ENCODE measurements at regions of chr21 and their contacts with region 1.

Region 1: GRCh38 chr21:37267269-37268184 is at the start of gene VPS26C:
- DNase-seq: peak; percentile 99 to 100 (median 100)
- H3K4me3 ChIP-seq: peak within 1 kb of the TSS; percentile 64 to 85 (median 71)
- H3K4me3 Mint-ChIP-seq: peak within 1 kb of the TSS; percentile 91 to 96
- H3K27ac ChIP-seq: peak within 1 kb of the TSS; percentile 98 to 100
- H3K27ac Mint-ChIP-seq: peak within 1 kb of the TSS; percentile 97 to 99 (median 99)
- H3K4me1 ChIP-seq: peaks cover 27 to 48% of the 10 kb centered on the region in 2 donors
- H3K4me1 Mint-ChIP-seq: peaks cover 33% of the 10 kb centered on the region
- H3K27me3 ChIP-seq: no peaks in the 10 kb centered on the region
- H3K27me3 Mint-ChIP-seq: no peaks in the 10 kb centered on the region
- CTCF ChIP-seq: no peak
- polyA plus RNA-seq, gene VPS26C: 45.4 to 75.4 (median 69.3) TPM

Region 2: DNA sequence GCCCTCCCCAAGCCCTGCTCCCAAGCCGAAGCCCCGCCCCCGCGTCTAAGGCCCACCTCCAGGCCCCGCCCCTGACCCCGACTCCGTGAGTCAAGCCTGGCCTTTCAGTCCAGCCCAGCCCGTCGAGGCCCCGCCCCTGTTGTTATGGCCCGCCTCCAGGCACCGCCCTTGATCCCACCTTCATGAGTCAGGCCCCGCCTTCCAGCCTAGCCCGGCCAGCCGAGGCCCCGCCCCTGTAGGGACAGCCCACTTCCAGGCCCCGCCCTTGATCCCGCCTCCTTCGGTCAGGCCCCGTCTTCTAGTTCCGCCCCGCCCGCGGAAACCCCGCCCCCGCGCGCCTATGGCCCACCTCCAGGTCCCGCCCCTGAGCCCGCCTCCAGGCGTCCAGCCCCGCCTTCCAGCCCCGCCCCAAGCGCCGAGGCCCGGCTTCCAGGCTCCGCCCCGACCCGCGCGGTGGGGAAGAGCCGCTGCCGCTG is 1111.2 kb before region 1 on chr21:
- intact Hi-C with region 1: loop called in 1 of 2 experiments (anchors 10 kb)
- DNase-seq: peak; percentile 99
- H3K4me3 ChIP-seq: peak overlapping the region; percentile 73 to 90 (median 77)
- H3K4me3 Mint-ChIP-seq: peak overlapping the region; percentile 86 to 93
- H3K27ac ChIP-seq: peak overlapping the region; percentile 57 to 80
- H3K27ac Mint-ChIP-seq: peak overlapping the region in 4 of 7 donors; percentile 77 to 94 (median 90)
- H3K4me1 ChIP-seq: peaks cover 43 to 46% of the 10 kb centered on the region in 2 donors
- H3K4me1 Mint-ChIP-seq: peaks cover 52% of the 10 kb centered on the region
- H3K27me3 ChIP-seq: no peaks in the 10 kb centered on the region
- H3K27me3 Mint-ChIP-seq: peaks cover 1 to 3% (median 2%) of the 10 kb centered on the region in 3 donors
- CTCF ChIP-seq: no peak

Region 3: GRCh38 chr21:37220981-37221664 is 46.4 kb before region 1 on chr21:
- intact Hi-C with region 1: loop called in 1 of 2 experiments (anchors 10 kb)
- DNase-seq: peak; percentile 89 to 96 (median 94)
- H3K4me3 ChIP-seq: peak overlapping the region; percentile 55 to 82 (median 67)
- H3K4me3 Mint-ChIP-seq: peak overlapping the region; percentile 90 to 93
- H3K27ac ChIP-seq: peak overlapping the region; percentile 21 to 55
- H3K27ac Mint-ChIP-seq: peak overlapping the region; percentile 32 to 87 (median 78)
- H3K4me1 ChIP-seq: peaks cover 14 to 24% of the 10 kb centered on the region in 2 donors
- H3K4me1 Mint-ChIP-seq: peaks cover 23% of the 10 kb centered on the region
- H3K27me3 ChIP-seq: no peaks in the 10 kb centered on the region
- H3K27me3 Mint-ChIP-seq: peaks cover 2 to 10% (median 9%) of the 10 kb centered on the region in 3 donors
- CTCF ChIP-seq: peak; percentile 67

Region 4: GRCh38 chr21:37251294-37251634 is 16.3 kb before region 1 on chr21:
- intact Hi-C with region 1: loop called in 1 of 2 experiments (anchors 2 kb)
- DNase-seq: peak; percentile 48 to 69 (median 65)
- H3K4me3 ChIP-seq: no peak overlapping the region
- H3K4me3 Mint-ChIP-seq: no peak overlapping the region
- H3K27ac ChIP-seq: peak overlapping the region in 1 of 2 donors; percentile 52
- H3K27ac Mint-ChIP-seq: peak overlapping the region; percentile 80 to 91 (median 88)
- H3K4me1 ChIP-seq: peaks cover 17 to 24% of the 10 kb centered on the region in 2 donors
- H3K4me1 Mint-ChIP-seq: peaks cover 31% of the 10 kb centered on the region
- H3K27me3 ChIP-seq: no peaks in the 10 kb centered on the region
- H3K27me3 Mint-ChIP-seq: no peaks in the 10 kb centered on the region
- CTCF ChIP-seq: peak; percentile 23

Region 5: GRCh38 chr21:37366482-37367316 is 99.2 kb after region 1 on chr21 and contains the start of gene DYRK1A:
- intact Hi-C with region 1: loop called (anchors 2 kb)
- DNase-seq: peak; percentile 97 to 100 (median 99)
- H3K4me3 ChIP-seq: peak within 1 kb of the TSS; percentile 84 to 98 (median 95)
- H3K4me3 Mint-ChIP-seq: peak within 1 kb of the TSS; percentile 97 to 100
- H3K27ac ChIP-seq: peak within 1 kb of the TSS; percentile 93 to 97
- H3K27ac Mint-ChIP-seq: peak within 1 kb of the TSS; percentile 98 to 100 (median 100)
- H3K4me1 ChIP-seq: peaks cover 34 to 46% of the 10 kb centered on the region in 2 donors
- H3K4me1 Mint-ChIP-seq: peaks cover 42% of the 10 kb centered on the region
- H3K27me3 ChIP-seq: no peaks in the 10 kb centered on the region
- H3K27me3 Mint-ChIP-seq: peaks cover 0 to 2% (median 0%) of the 10 kb centered on the region in 3 donors
- CTCF ChIP-seq: no peak
- polyA plus RNA-seq, gene DYRK1A: 1.8 to 53.5 (median 2.4) TPM

Region 6: DNA sequence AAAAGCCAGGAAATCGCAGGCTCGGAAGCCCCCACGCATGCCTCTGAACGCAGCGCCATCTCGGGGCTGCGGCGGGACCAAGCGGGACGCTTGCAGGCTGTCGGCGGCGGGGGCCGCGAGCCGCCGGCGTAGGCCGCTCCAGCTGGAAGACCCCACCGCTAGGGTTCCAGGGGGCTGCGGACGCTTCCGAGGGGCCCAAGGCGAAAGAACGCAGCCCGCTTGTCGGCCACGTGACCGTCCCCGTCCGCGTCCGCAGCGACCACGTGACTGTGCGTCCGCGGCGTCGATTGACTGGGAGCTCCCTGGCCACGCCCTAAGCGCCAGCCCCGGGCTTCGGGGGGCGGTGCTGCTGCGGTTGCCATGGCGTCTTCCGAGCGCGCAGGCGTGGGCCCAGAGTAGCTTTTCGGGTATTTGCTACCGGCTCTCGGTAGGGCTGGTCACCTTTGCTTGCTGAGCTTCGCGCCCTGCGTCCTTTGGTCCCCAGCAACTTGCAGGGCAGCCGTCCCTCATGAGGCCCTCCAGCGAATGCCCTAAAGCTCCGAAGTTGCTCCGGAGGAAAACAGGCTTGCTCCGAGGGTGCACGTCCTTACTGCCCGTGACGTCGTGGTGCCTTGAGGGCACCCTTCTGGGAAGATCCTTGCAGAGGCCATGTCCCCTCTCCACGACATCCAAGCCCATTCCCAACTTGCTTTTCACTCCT is 296.3 kb after region 1 on chr21:
- intact Hi-C with region 1: loop called (anchors 5 to 10 kb)
- DNase-seq: peak; percentile 90 to 92 (median 92)
- H3K4me3 ChIP-seq: peak overlapping the region; percentile 63 to 78 (median 77)
- H3K4me3 Mint-ChIP-seq: peak overlapping the region; percentile 95 to 96
- H3K27ac ChIP-seq: peak overlapping the region; percentile 93 to 96
- H3K27ac Mint-ChIP-seq: peak overlapping the region; percentile 97 to 100 (median 99)
- H3K4me1 ChIP-seq: peaks cover 25 to 31% of the 10 kb centered on the region in 2 donors
- H3K4me1 Mint-ChIP-seq: peaks cover 24% of the 10 kb centered on the region
- H3K27me3 ChIP-seq: no peaks in the 10 kb centered on the region
- H3K27me3 Mint-ChIP-seq: peaks cover 0 to 6% (median 0%) of the 10 kb centered on the region in 3 donors
- CTCF ChIP-seq: peak; percentile 15